ENCODE measurements at regions of chr17 and their contacts with region 1.

Region 1: GRCh38 chr17:42422958-42423712 is at the start of gene CAVIN1:
- DNase-seq: peak; percentile 100
- H3K4me3 ChIP-seq: peak within 1 kb of the TSS; percentile 72 to 98 (median 93)
- H3K27ac ChIP-seq: peak within 1 kb of the TSS; percentile 98 to 100 (median 98)
- H3K4me1 ChIP-seq: peaks cover 0 to 47% (median 42%) of the 10 kb centered on the region in 4 donors
- H3K27me3 ChIP-seq: no peaks in the 10 kb centered on the region
- CTCF ChIP-seq: no peak
- EP300 ChIP-seq: peak in 1 of 4 donors; percentile 3
- POLR2A ChIP-seq: peak; percentile 95 to 98
- total RNA-seq, gene CAVIN1: 231 to 519 (median 409) TPM

Region 2: GRCh38 chr17:42276359-42276608 is 146.9 kb before region 1 on chr17 and contains the start of gene STAT5B:
- intact Hi-C with region 1: no loop called
- DNase-seq: peak; percentile 85
- H3K4me3 ChIP-seq: peak within 1 kb of the TSS; percentile 65 to 98 (median 76)
- H3K27ac ChIP-seq: peak within 1 kb of the TSS; percentile 84 to 94 (median 90)
- H3K4me1 ChIP-seq: peaks cover 0 to 53% (median 46%) of the 10 kb centered on the region in 4 donors
- H3K27me3 ChIP-seq: no peaks in the 10 kb centered on the region
- CTCF ChIP-seq: no peak
- EP300 ChIP-seq: no peak
- POLR2A ChIP-seq: no peak
- total RNA-seq, gene STAT5B: 93.5 to 117 (median 98.4) TPM

Region 3: GRCh38 chr17:42459256-42459800 is 36.2 kb after region 1 on chr17:
- intact Hi-C with region 1: loop called (anchors 2 kb)
- DNase-seq: peak; percentile 78
- H3K4me3 ChIP-seq: peak overlapping the region; percentile 72 to 86 (median 78)
- H3K27ac ChIP-seq: peak overlapping the region; percentile 95 to 99 (median 96)
- H3K4me1 ChIP-seq: peaks cover 0 to 30% (median 15%) of the 10 kb centered on the region in 4 donors
- H3K27me3 ChIP-seq: no peaks in the 10 kb centered on the region
- CTCF ChIP-seq: peak in 1 of 4 experiments; percentile 8
- EP300 ChIP-seq: no peak
- POLR2A ChIP-seq: no peak

Region 4: DNA sequence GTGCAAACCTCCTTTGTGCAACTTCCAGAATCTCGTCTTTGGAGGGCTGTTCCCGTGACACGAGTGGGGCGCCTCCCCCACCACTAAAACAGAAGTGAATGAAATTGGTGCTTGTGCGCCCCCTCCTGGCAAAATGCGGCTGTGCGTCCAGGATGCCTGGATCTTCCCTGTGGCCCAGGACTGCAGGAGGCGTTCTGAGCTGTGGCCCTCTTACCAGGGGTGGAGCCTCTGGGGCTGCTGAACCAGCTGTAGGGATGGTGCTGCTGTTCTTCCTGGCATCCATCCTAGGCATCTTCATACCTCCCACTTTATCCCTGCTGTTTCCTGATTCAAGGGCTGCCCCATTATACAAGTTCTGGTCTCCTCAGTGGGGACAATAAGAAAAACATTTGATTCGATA is 94.4 kb after region 1 on chr17:
- intact Hi-C with region 1: loop called (anchors 2 kb)
- DNase-seq: peak; percentile 95
- H3K4me3 ChIP-seq: no peak overlapping the region
- H3K27ac ChIP-seq: peak overlapping the region; percentile 95 to 98 (median 98)
- H3K4me1 ChIP-seq: peaks cover 0 to 69% (median 64%) of the 10 kb centered on the region in 4 donors
- H3K27me3 ChIP-seq: no peaks in the 10 kb centered on the region
- CTCF ChIP-seq: peak; percentile 87 to 96 (median 94)
- EP300 ChIP-seq: no peak
- POLR2A ChIP-seq: no peak

Region 5: DNA sequence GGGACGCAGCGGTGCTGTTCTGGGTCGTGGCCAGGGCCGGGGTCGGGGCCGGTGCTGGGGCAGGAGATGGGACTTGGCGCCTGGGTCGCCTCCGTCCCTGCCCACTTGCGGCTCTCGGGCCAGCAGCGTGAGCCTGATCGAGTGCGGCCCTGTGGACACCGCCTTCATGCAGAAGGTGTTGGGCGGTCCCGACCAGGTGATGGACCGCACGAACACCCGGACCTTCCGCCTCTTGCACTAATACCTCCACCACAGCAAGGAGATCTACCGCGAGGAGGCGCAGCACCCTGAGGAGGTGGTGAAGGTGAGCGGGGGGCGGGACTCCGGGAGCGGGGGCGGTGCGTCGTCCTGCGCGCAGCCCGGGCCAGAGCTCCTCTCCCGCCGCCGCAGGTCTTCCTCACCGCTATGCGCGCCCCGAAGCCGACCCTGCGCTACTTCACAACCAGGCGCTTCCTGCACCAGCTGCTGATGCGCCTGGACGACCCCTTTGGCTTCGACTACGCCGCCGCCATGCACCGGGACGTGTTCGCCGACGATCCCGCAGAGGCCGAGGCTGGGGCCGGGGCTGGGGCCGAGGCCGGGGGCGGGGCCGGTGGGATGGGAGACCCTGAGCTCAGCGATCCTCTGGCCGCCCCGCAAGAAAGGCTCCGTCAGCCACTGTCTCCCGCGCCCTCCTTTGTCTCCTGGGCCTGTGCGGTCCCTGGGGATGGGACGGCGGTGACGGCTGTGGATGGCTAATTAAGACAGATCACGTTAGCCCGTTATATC is 125.1 kb after region 1 on chr17:
- intact Hi-C with region 1: no loop called
- DNase-seq: no peak
- H3K4me3 ChIP-seq: peak overlapping the region in 3 of 4 donors; percentile 20 to 31 (median 27)
- H3K27ac ChIP-seq: no peak overlapping the region
- H3K4me1 ChIP-seq: peaks cover 0 to 23% (median 12%) of the 10 kb centered on the region in 4 donors
- H3K27me3 ChIP-seq: peaks cover 0 to 7% (median 0%) of the 10 kb centered on the region in 3 donors
- CTCF ChIP-seq: peak in 1 of 4 experiments; percentile 17
- EP300 ChIP-seq: no peak
- POLR2A ChIP-seq: no peak

Measured in sigmoid colon (tissue), 7 donors.